B cell (primary cell): ENCODE measurements at regions of chr5 and their contacts with region 1.

Region 1: DNA sequence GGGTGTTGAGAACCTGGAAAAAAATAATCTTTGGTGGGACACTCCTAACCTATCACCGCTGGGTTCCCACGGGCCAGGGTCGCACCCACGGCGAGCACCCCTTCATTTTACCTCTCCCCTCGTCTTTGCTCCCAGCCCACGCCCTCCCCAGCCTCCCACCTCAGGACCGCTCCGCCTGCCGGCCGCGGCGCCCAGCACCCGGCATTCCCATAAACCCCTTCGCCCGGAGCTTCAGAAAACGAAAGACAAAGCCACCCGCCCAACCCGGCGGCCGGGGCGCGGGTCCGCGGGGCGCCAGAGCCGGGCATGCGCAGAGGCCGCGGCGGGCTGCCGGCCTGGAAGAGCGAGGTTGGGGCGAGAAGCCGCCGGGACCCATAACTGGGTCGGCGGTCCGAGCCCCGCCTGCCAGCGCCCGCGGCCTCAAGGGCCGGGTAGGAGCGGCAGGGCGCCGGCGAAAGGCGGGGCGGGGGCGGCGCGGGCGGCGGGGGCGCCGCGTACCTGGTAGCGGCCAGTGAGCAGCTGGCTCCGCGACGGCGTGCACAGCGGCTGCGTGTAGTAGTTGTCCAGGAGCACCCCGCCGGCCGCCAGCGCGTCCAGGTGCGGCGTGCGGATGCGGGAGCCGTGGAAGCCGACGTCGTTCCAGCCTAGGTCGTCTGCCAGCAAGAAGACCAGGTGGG is 533 bp downstream of the ARSB start:
- DNase-seq: peak; percentile 90
- ATAC-seq: peak; percentile 60
- H3K4me3 ChIP-seq: peak overlapping the region; percentile 44 to 85 (median 84)
- H3K4me3 Mint-ChIP-seq: peak overlapping the region; percentile 89
- H3K27ac ChIP-seq: peak overlapping the region; percentile 67 to 89
- H3K27ac Mint-ChIP-seq: peak overlapping the region; percentile 92
- H3K4me1 ChIP-seq: peaks cover 18 to 24% of the 10 kb centered on the region in 2 donors
- H3K4me1 Mint-ChIP-seq: peaks cover 43% of the 10 kb centered on the region
- H3K27me3 ChIP-seq: no peaks in the 10 kb centered on the region
- H3K27me3 Mint-ChIP-seq: no peaks in the 10 kb centered on the region
- CTCF ChIP-seq: no peak

Region 2: GRCh38 chr5:77775790-77776553 is 1208.6 kb before region 1 on chr5 and contains the start of gene TBCA:
- CTCF ChIA-PET with region 1: no interaction called
- POLR2A ChIA-PET with region 1: no interaction called
- intact Hi-C with region 1: loop called (anchors 10 kb)
- DNase-seq: peak; percentile 98
- ATAC-seq: peak; percentile 85
- H3K4me3 ChIP-seq: peak within 1 kb of the TSS; percentile 55 to 96 (median 74)
- H3K4me3 Mint-ChIP-seq: peak within 1 kb of the TSS; percentile 90
- H3K27ac ChIP-seq: peak within 1 kb of the TSS; percentile 93 to 98
- H3K27ac Mint-ChIP-seq: peak within 1 kb of the TSS; percentile 98
- H3K4me1 ChIP-seq: peaks cover 19 to 22% of the 10 kb centered on the region in 2 donors
- H3K4me1 Mint-ChIP-seq: peaks cover 35% of the 10 kb centered on the region
- H3K27me3 ChIP-seq: no peaks in the 10 kb centered on the region
- H3K27me3 Mint-ChIP-seq: no peaks in the 10 kb centered on the region
- CTCF ChIP-seq: peak; percentile 42
- total RNA-seq, gene TBCA: 94.8 and 110 TPM in 2 replicates

Region 3: GRCh38 chr5:78294248-78295034 is 690.1 kb before region 1 on chr5 and contains the start of gene AP3B1:
- CTCF ChIA-PET with region 1: no interaction called
- POLR2A ChIA-PET with region 1: interaction called, 4 read pairs
- intact Hi-C with region 1: loop called (anchors 1 kb)
- DNase-seq: peak; percentile 98
- ATAC-seq: peak; percentile 91
- H3K4me3 ChIP-seq: peak within 1 kb of the TSS; percentile 74 to 99 (median 87)
- H3K4me3 Mint-ChIP-seq: peak within 1 kb of the TSS; percentile 98
- H3K27ac ChIP-seq: peak within 1 kb of the TSS; percentile 75 to 90
- H3K27ac Mint-ChIP-seq: peak within 1 kb of the TSS; percentile 98
- H3K4me1 ChIP-seq: peaks cover 11 to 12% of the 10 kb centered on the region in 2 donors
- H3K4me1 Mint-ChIP-seq: peaks cover 36% of the 10 kb centered on the region
- H3K27me3 ChIP-seq: no peaks in the 10 kb centered on the region
- H3K27me3 Mint-ChIP-seq: no peaks in the 10 kb centered on the region
- CTCF ChIP-seq: no peak
- total RNA-seq, gene AP3B1: 58.9 and 63.5 TPM in 2 replicates

Region 4: GRCh38 chr5:78757269-78758053 is 227.1 kb before region 1 on chr5:
- CTCF ChIA-PET with region 1: interaction called, 3 read pairs
- POLR2A ChIA-PET with region 1: no interaction called
- intact Hi-C with region 1: loop called (anchors 10 kb)
- DNase-seq: peak; percentile 27
- ATAC-seq: peak; percentile 21
- H3K4me3 ChIP-seq: no peak overlapping the region
- H3K4me3 Mint-ChIP-seq: peak overlapping the region; percentile 78
- H3K27ac ChIP-seq: peak overlapping the region; percentile 53 to 70
- H3K27ac Mint-ChIP-seq: peak overlapping the region; percentile 96
- H3K4me1 ChIP-seq: peaks cover 63 to 64% of the 10 kb centered on the region in 2 donors
- H3K4me1 Mint-ChIP-seq: peaks cover 78% of the 10 kb centered on the region
- H3K27me3 ChIP-seq: no peaks in the 10 kb centered on the region
- H3K27me3 Mint-ChIP-seq: no peaks in the 10 kb centered on the region
- CTCF ChIP-seq: no peak

Region 5: DNA sequence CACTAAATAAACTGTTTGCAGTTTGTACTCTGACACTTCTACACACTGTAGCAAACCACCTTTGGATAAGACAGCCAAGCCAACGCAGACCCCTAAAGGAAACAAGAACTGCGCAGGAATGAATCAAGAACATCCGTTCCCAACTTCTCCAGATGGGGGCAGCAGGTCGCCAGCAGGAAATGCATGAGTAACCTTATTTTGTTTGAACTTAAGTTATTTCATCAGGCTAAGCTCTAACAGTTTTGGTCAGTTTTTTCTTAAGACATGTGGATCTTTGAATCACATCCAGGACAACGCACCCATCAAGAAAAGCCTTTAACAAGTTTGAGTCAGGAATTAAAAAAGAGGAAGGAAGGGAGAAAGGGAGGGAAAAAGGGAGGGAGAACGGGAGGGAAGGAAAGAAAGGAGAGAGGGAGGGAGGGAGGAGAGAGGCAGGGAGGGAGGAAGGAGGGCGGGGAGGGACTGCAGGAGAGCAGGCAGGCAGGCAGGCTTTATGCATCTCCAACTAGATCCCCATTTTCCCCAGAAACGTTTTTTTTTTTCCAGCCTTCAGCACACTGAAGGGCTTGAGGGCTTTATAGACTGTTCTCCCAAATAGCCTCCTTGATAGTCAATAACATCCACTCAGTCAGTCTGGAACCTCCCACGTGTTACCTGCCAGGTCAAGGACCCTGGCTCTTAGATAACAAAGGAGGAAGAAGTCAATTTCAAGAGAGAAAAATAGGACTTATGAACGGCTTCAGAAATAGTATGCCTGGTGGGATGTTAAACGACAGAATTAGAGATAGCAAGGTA is 149.3 kb after region 1 on chr5:
- CTCF ChIA-PET with region 1: interaction called, 13 read pairs
- POLR2A ChIA-PET with region 1: interaction called, 8 read pairs
- intact Hi-C with region 1: loop called (anchors 2 kb)
- DNase-seq: peak; percentile 66
- ATAC-seq: peak; percentile 58
- H3K4me3 ChIP-seq: peak overlapping the region in 1 of 5 experiments; percentile 0
- H3K4me3 Mint-ChIP-seq: no peak overlapping the region
- H3K27ac ChIP-seq: no peak overlapping the region
- H3K27ac Mint-ChIP-seq: no peak overlapping the region
- H3K4me1 ChIP-seq: peaks cover 7 to 10% of the 10 kb centered on the region in 2 donors
- H3K4me1 Mint-ChIP-seq: peaks cover 8% of the 10 kb centered on the region
- H3K27me3 ChIP-seq: peaks cover 0 to 3% (median 0%) of the 10 kb centered on the region in 4 experiments
- H3K27me3 Mint-ChIP-seq: peaks cover 8% of the 10 kb centered on the region
- CTCF ChIP-seq: peak; percentile 66

Region 6: DNA sequence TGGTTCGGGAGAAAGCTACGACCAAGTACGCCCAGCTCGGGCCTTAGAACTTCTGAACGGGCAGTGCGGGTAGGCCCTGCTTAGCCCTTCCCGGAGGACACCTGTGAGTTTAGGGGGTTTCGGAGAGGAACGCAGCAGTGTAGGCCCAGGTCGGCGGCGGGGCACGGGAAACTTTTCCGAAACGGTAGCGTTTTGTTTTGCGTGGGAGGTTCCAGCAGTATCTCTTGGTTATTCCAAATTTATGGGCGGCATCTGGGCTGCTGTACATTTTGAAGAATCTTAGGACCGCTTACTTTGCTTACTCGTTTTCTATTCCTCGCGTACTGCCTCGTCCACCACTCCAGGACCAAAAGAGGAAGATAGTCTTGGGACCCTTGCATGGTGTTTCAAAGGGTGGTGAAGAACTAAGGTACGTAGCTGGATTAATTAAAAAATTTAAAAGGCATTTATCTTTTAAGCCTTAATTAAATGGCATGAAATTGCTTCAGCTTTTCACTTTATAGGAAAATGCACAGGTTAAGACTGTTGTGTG is 628.2 kb after region 1 on chr5:
- CTCF ChIA-PET with region 1: no interaction called
- POLR2A ChIA-PET with region 1: no interaction called
- intact Hi-C with region 1: loop called (anchors 5 kb)
- DNase-seq: no peak
- ATAC-seq: no peak
- H3K4me3 ChIP-seq: peak overlapping the region; percentile 93 to 98 (median 96)
- H3K4me3 Mint-ChIP-seq: peak overlapping the region; percentile 95
- H3K27ac ChIP-seq: peak overlapping the region; percentile 95 to 99
- H3K27ac Mint-ChIP-seq: peak overlapping the region; percentile 96
- H3K4me1 ChIP-seq: peaks cover 16 to 21% of the 10 kb centered on the region in 2 donors
- H3K4me1 Mint-ChIP-seq: peaks cover 36% of the 10 kb centered on the region
- H3K27me3 ChIP-seq: no peaks in the 10 kb centered on the region
- H3K27me3 Mint-ChIP-seq: no peaks in the 10 kb centered on the region
- CTCF ChIP-seq: no peak